B cell (primary cell): ENCODE measurements at regions of chr6 and their contacts with region 1.

Region 1: GRCh38 chr6:129598244-129599187 is 111.5 kb downstream of the ARHGAP18 start:
- DNase-seq: peak; percentile 81
- ATAC-seq: peak; percentile 76
- H3K4me3 ChIP-seq: no peak overlapping the region
- H3K4me3 Mint-ChIP-seq: no peak overlapping the region
- H3K27ac ChIP-seq: no peak overlapping the region
- H3K27ac Mint-ChIP-seq: no peak overlapping the region
- H3K4me1 ChIP-seq: peaks cover 5 to 9% of the 10 kb centered on the region in 2 donors
- H3K4me1 Mint-ChIP-seq: peaks cover 8% of the 10 kb centered on the region
- H3K27me3 ChIP-seq: no peaks in the 10 kb centered on the region
- H3K27me3 Mint-ChIP-seq: no peaks in the 10 kb centered on the region
- CTCF ChIP-seq: peak; percentile 91

Region 2: DNA sequence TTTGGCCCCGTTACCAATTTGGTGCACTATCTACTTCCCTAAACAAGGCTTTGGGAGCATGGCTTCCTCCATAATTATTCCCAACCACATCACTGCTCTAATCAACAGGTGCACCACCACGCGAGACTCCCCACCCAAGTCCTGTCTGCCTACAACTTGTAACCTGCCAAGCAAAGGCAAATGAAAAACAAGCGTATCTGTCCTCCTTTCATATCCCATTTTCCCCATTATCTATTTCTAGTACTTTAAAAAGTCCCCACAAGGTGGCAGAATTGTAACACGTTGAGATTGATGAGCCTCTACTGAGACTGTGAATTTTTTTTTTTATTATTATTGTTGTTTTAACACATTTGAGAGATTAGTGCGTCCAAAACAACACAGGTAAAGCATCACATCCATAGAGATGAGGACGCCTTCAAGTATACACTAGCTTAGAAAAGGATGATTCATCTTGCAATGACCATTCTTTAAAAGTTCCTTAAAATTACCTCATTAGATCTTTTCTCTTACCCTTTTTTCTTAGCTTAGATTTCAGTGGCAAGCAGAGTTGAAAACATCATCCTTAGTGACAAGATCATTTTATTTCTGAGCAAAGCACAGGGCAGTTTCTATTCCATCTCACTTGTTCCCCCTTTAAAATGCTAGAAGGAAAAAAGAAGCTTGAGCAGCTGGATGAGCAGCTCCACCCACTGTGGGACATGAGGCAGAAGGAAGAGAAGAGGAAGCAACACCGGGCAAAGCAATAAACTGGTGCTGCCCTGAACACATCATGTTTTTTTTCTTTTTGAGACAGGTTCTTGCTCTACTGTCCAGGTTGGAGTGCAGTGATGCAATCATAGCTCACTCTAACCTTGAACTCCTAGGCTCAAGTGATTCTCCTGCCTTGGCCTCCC is 99.3 kb before region 1 on chr6:
- CTCF ChIA-PET with region 1: interaction called, 28 read pairs
- POLR2A ChIA-PET with region 1: no interaction called
- intact Hi-C with region 1: loop called (anchors 2 kb)
- DNase-seq: peak; percentile 73
- ATAC-seq: peak; percentile 78
- H3K4me3 ChIP-seq: no peak overlapping the region
- H3K4me3 Mint-ChIP-seq: peak overlapping the region; percentile 31
- H3K27ac ChIP-seq: peak overlapping the region in 1 of 2 donors; percentile 9
- H3K27ac Mint-ChIP-seq: no peak overlapping the region
- H3K4me1 ChIP-seq: peaks cover 9 to 10% of the 10 kb centered on the region in 2 donors
- H3K4me1 Mint-ChIP-seq: peaks cover 9% of the 10 kb centered on the region
- H3K27me3 ChIP-seq: no peaks in the 10 kb centered on the region
- H3K27me3 Mint-ChIP-seq: peaks cover 2% of the 10 kb centered on the region
- CTCF ChIP-seq: peak; percentile 79

Region 3: DNA sequence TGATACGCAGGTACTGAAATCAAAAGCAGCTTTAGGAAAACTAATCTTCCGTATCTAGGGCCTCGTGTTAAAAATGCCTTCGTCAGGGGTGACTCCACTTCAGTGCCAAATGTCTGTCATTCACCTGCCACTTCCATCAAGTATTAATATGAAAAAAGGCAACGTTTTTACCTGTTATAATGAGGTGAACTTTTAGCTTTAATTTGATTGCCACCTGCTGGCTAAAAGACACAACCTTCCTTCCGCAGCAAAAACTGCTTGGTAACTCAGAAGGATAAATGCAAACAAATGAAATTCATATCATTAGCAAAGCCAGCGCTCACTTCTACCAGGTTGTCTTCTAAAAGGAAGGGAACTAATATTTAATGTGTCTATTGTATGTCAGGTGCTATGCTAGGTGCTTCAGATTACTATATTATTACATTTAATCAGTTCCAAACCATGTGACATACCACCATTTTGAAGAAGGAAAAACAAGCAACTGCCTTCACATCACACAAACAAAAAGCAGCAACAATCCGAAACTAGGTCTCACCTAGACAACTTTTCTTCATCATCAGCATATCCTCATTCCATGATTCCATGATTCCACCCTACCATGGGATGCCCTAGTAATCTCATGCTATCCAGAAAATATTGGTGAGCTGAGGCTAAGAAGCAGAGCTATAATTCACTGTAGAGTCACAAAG is 132.1 kb after region 1 on chr6:
- CTCF ChIA-PET with region 1: interaction called, 349 read pairs
- POLR2A ChIA-PET with region 1: no interaction called
- intact Hi-C with region 1: loop called (anchors 1 kb)
- DNase-seq: peak; percentile 65
- ATAC-seq: peak; percentile 24
- H3K4me3 ChIP-seq: no peak overlapping the region
- H3K4me3 Mint-ChIP-seq: no peak overlapping the region
- H3K27ac ChIP-seq: no peak overlapping the region
- H3K27ac Mint-ChIP-seq: no peak overlapping the region
- H3K4me1 ChIP-seq: peaks cover 0 to 4% of the 10 kb centered on the region in 2 donors
- H3K4me1 Mint-ChIP-seq: no peaks in the 10 kb centered on the region
- H3K27me3 ChIP-seq: no peaks in the 10 kb centered on the region
- H3K27me3 Mint-ChIP-seq: no peaks in the 10 kb centered on the region
- CTCF ChIP-seq: peak; percentile 78

Region 4: GRCh38 chr6:129748212-129748900 is 149.8 kb after region 1 on chr6:
- CTCF ChIA-PET with region 1: interaction called, 46 read pairs
- POLR2A ChIA-PET with region 1: no interaction called
- intact Hi-C with region 1: no loop called
- DNase-seq: peak; percentile 78
- ATAC-seq: peak; percentile 90
- H3K4me3 ChIP-seq: peak overlapping the region in 3 of 5 experiments; percentile 24 to 42 (median 24)
- H3K4me3 Mint-ChIP-seq: peak overlapping the region; percentile 70
- H3K27ac ChIP-seq: peak overlapping the region; percentile 70 to 80
- H3K27ac Mint-ChIP-seq: peak overlapping the region; percentile 81
- H3K4me1 ChIP-seq: peaks cover 43 to 46% of the 10 kb centered on the region in 2 donors
- H3K4me1 Mint-ChIP-seq: peaks cover 58% of the 10 kb centered on the region
- H3K27me3 ChIP-seq: no peaks in the 10 kb centered on the region
- H3K27me3 Mint-ChIP-seq: no peaks in the 10 kb centered on the region
- CTCF ChIP-seq: no peak

Region 5: DNA sequence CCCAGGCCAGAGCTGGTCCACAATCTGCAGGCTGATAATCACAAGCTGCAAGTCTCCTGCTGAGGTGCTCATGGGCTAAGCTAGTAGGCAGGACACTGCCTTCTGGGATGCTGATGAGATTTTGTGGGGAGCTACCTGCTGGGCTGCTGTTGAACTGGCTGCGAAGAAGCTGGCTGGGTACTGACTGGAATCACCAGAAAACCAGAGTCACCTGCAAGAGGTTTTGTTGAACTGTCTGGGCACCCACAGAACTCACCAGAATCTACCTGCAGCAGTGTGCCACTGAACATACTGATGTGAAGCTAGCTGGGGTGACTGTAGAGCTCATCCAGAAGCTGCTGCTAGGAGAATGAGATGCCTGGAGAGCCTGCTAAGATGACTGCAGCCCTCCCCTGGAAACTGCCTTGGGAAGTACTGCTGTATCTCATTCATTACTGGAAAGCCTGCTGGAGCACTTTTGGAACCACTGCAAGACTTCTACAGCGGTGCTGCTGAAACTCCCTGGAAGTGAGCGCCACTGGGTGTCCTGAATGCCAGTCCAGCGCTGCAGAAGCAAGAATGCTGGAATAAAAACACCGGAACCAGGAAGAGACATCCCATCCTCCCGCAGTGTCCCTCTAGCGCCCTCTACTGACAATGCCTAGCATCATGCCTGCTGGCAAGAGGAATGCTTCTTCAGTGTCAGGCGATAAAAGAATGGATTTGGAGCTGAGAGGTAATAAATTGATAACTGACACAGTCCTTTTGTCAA is 176.4 kb after region 1 on chr6:
- CTCF ChIA-PET with region 1: interaction called, 11 read pairs
- POLR2A ChIA-PET with region 1: no interaction called
- intact Hi-C with region 1: no loop called
- DNase-seq: peak; percentile 43
- ATAC-seq: peak; percentile 49
- H3K4me3 ChIP-seq: no peak overlapping the region
- H3K4me3 Mint-ChIP-seq: no peak overlapping the region
- H3K27ac ChIP-seq: no peak overlapping the region
- H3K27ac Mint-ChIP-seq: no peak overlapping the region
- H3K4me1 ChIP-seq: no peaks in the 10 kb centered on the region
- H3K4me1 Mint-ChIP-seq: peaks cover 3% of the 10 kb centered on the region
- H3K27me3 ChIP-seq: no peaks in the 10 kb centered on the region
- H3K27me3 Mint-ChIP-seq: peaks cover 19% of the 10 kb centered on the region
- CTCF ChIP-seq: peak; percentile 72

Region 6: DNA sequence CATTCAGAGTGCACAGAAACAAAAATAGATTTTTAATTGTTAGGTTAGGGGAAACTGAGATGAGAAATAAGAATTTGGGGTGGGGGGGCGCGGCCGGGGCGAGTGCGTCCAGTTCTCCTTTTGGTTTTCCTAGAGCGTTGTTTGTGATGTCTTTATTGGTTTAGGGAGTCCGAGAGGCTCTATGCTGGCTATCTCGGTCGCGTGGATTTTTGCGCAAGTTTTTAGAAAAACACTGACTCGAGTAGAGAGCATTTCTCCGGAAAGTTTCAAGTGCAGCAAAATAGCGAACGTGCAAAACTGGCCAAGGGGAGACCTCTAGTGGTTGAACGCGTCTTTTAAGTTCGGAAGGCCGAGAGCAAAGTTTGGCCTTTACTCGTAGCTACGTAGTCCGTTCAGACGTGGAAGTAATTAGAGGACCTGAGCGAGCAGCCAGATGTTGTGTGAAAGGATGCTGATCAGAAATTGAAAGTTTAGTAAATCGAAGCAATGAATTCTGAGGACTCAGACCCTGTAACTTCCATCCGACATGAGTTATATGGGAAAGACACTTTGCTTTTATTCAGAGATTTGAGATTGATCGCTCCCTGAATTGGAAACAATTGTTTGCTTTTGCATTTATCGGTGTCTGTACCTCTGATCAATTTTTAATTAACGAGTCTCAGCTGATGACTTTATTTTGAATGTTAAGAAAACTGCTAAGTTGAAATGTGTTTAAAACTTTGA is 422.6 kb after region 1 on chr6:
- CTCF ChIA-PET with region 1: interaction called, 54 read pairs
- POLR2A ChIA-PET with region 1: interaction called, 3 read pairs
- intact Hi-C with region 1: loop called (anchors 1 kb)
- DNase-seq: peak; percentile 91
- ATAC-seq: peak; percentile 59
- H3K4me3 ChIP-seq: peak overlapping the region; percentile 70 to 77 (median 73)
- H3K4me3 Mint-ChIP-seq: peak overlapping the region; percentile 99
- H3K27ac ChIP-seq: peak overlapping the region; percentile 59 to 82
- H3K27ac Mint-ChIP-seq: peak overlapping the region; percentile 99
- H3K4me1 ChIP-seq: peaks cover 10% of the 10 kb centered on the region in 2 donors
- H3K4me1 Mint-ChIP-seq: peaks cover 29% of the 10 kb centered on the region
- H3K27me3 ChIP-seq: no peaks in the 10 kb centered on the region
- H3K27me3 Mint-ChIP-seq: no peaks in the 10 kb centered on the region
- CTCF ChIP-seq: peak; percentile 81